ENCODE measurements at regions of chr20 and their contacts with region 1.

Region 1: DNA sequence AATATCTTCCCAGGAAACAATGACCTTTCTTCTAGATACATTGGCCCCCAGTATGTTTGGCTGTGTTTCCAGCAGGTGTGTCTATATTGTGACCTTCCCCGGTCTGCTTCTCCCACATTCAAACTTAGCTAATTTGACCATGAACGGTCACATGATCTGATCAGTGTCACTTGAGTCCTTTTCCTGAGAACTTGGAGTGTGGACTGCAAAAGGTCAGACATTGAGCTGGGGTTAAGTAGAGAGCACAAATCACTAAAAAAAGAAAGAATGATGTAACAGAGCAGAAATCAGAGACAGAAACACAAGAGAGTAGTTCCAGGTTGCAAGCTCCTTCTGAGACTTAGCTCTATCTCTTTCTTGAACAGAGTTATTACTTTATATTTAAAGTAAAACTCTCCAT is 734.0 kb downstream of the CBLN4 start:
- DNase-seq: no peak
- H3K4me3 ChIP-seq: no peak overlapping the region
- H3K27ac ChIP-seq: no peak overlapping the region
- H3K4me1 ChIP-seq: no peaks in the 10 kb centered on the region
- H3K27me3 ChIP-seq: no peaks in the 10 kb centered on the region
- CTCF ChIP-seq: no peak
- EP300 ChIP-seq: no peak
- POLR2A ChIP-seq: no peak

Region 2: GRCh38 chr20:55291261-55291660 is 19.9 kb after region 1 on chr20:
- in situ Hi-C with region 1: no loop called
- intact Hi-C with region 1: loop called (anchors 1 kb)
- DNase-seq: no peak
- H3K4me3 ChIP-seq: no peak overlapping the region
- H3K27ac ChIP-seq: no peak overlapping the region
- H3K4me1 ChIP-seq: no peaks in the 10 kb centered on the region
- H3K27me3 ChIP-seq: no peaks in the 10 kb centered on the region
- CTCF ChIP-seq: no peak
- EP300 ChIP-seq: no peak
- POLR2A ChIP-seq: no peak

Region 3: GRCh38 chr20:55515832-55516231 is 244.5 kb after region 1 on chr20:
- in situ Hi-C with region 1: no loop called
- intact Hi-C with region 1: no loop called
- DNase-seq: no peak
- H3K4me3 ChIP-seq: no peak overlapping the region
- H3K27ac ChIP-seq: no peak overlapping the region
- H3K4me1 ChIP-seq: no peaks in the 10 kb centered on the region
- H3K27me3 ChIP-seq: no peaks in the 10 kb centered on the region
- CTCF ChIP-seq: no peak
- EP300 ChIP-seq: no peak
- POLR2A ChIP-seq: no peak